Caco-2 (cell line): ENCODE measurements at regions of chr10 and their contacts with region 1.

Region 1: DNA sequence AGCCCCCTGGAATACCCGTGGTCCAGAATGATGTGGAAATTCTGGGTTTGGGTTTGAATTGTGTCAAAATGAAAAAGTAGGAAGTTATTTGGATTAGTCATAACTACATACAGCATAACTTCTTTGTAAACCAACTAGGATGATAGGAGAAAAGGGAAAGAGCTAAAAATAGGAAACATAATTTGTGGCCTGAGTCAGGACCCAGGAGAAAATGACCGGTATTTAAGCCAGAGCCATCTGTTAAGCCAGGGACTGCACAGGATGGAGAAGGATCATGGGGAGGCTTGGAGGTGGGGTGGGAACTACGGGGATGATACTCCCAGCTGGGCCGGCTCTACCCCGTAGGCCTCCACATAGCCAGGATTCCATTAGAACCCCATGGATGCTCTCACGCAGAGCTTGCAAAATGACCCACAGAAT is 98.6 kb downstream of the MYOF start:
- DNase-seq: no peak
- H3K4me3 ChIP-seq: no peak overlapping the region
- H3K4me3 Mint-ChIP-seq: no peak overlapping the region
- H3K27ac Mint-ChIP-seq: peak overlapping the region; percentile 53
- H3K4me1 ChIP-seq: no peaks in the 10 kb centered on the region
- H3K4me1 Mint-ChIP-seq: peaks cover 9% of the 10 kb centered on the region
- H3K27me3 ChIP-seq: no peaks in the 10 kb centered on the region
- H3K27me3 Mint-ChIP-seq: no peaks in the 10 kb centered on the region
- CTCF ChIP-seq: no peak

Region 2: DNA sequence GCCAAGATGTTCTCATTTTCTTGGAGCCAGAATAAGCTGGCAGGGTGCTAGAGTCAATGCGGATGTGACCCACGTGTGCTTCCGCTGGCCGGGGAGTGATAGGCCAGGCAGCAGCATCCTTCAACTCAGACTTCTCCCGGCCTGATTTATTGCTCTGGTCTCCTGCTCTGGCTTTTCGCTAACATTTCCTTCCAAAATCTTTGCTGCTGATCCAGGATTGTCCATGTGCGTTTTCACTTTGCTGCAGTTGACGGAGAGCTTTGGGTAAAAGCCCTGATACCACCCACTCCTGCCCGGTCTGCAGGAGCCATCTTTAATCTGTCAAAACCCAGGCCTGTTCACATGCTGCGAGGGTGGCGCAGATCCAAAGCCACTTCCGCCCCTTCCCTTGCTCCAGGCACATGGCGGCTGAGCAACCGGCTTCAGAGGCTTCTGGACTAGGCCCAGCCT is 203.1 kb before region 1 on chr10:
- CTCF ChIA-PET with region 1: no interaction called
- POLR2A ChIA-PET with region 1: no interaction called
- intact Hi-C with region 1: no loop called
- DNase-seq: no peak
- H3K4me3 ChIP-seq: no peak overlapping the region
- H3K4me3 Mint-ChIP-seq: no peak overlapping the region
- H3K27ac Mint-ChIP-seq: no peak overlapping the region
- H3K4me1 ChIP-seq: peaks cover 9% of the 10 kb centered on the region; the same call in 1 of the 2 replicates
- H3K4me1 Mint-ChIP-seq: no peaks in the 10 kb centered on the region
- H3K27me3 ChIP-seq: no peaks in the 10 kb centered on the region
- H3K27me3 Mint-ChIP-seq: no peaks in the 10 kb centered on the region
- CTCF ChIP-seq: no peak

Region 3: GRCh38 chr10:93368210-93368609 is 15.4 kb before region 1 on chr10:
- CTCF ChIA-PET with region 1: no interaction called
- POLR2A ChIA-PET with region 1: interaction called, 12 read pairs
- intact Hi-C with region 1: no loop called
- DNase-seq: no peak
- H3K4me3 ChIP-seq: no peak overlapping the region
- H3K4me3 Mint-ChIP-seq: no peak overlapping the region
- H3K27ac Mint-ChIP-seq: no peak overlapping the region
- H3K4me1 ChIP-seq: no peaks in the 10 kb centered on the region
- H3K4me1 Mint-ChIP-seq: no peaks in the 10 kb centered on the region
- H3K27me3 ChIP-seq: no peaks in the 10 kb centered on the region
- H3K27me3 Mint-ChIP-seq: no peaks in the 10 kb centered on the region
- CTCF ChIP-seq: no peak